ENCODE measurements at regions of chr18 and their contacts with region 1.

Region 1: DNA sequence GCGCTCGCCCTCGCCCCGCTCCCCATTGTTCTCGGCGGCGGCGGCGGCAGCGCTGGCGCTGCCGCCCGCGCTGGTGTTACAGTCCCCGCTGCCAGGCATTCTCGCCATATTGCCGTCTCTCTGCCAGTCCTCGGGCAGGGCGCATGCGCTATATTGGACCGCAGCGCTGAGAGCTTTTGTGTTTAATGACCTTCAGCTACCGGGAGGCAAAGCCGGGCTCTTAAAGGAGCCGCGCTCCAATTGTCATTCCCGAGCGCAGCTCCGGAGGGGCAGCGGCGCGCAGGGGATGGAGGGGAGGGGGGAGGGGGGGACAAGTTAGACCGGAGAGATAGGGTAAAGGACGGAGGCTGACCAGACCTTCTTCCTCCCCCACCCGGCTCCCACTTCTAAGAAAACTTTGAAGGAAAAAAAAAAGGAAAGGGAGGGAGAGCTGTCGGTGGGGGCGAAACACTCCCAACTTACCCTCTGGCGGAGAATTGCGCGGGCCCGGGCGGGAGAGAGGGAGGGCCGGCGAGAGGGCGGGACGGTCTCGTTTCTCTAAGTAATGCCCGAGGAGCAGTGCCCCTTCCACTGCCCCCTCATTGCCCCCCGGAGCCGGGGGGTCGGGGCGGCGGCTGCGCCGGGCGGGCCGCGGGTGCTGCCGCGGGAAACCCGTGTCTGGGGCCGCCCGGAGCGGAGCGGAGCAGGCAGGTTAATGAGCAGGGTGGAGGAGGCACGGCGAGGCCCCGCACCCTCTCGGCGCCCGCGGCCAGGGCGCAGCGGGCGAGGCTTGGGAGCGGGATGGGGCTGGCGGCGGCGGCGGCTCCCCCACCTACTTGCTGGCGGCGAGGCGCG is at the start of gene KCTD1:
- H3K4me3 Mint-ChIP-seq: peak within 1 kb of the TSS; percentile 89
- H3K27ac Mint-ChIP-seq: peak within 1 kb of the TSS; percentile 77
- H3K4me1 Mint-ChIP-seq: peaks cover 37% of the 10 kb centered on the region
- H3K27me3 Mint-ChIP-seq: peaks cover 67% of the 10 kb centered on the region

Region 2: GRCh38 chr18:26090130-26091046 is 458.3 kb before region 1 on chr18 and contains the start of gene SS18:
- intact Hi-C with region 1: loop called (anchors 10 kb)
- H3K4me3 Mint-ChIP-seq: peak within 1 kb of the TSS; percentile 94
- H3K27ac Mint-ChIP-seq: peak within 1 kb of the TSS; percentile 95
- H3K4me1 Mint-ChIP-seq: peaks cover 15% of the 10 kb centered on the region
- H3K27me3 Mint-ChIP-seq: no peaks in the 10 kb centered on the region

Region 3: GRCh38 chr18:26226229-26227005 is 322.2 kb before region 1 on chr18 and contains the start of gene TAF4B:
- intact Hi-C with region 1: loop called (anchors 5 kb)
- H3K4me3 Mint-ChIP-seq: peak within 1 kb of the TSS; percentile 96
- H3K27ac Mint-ChIP-seq: peak within 1 kb of the TSS; percentile 99
- H3K4me1 Mint-ChIP-seq: peaks cover 18% of the 10 kb centered on the region
- H3K27me3 Mint-ChIP-seq: peaks cover 9% of the 10 kb centered on the region

Region 4: DNA sequence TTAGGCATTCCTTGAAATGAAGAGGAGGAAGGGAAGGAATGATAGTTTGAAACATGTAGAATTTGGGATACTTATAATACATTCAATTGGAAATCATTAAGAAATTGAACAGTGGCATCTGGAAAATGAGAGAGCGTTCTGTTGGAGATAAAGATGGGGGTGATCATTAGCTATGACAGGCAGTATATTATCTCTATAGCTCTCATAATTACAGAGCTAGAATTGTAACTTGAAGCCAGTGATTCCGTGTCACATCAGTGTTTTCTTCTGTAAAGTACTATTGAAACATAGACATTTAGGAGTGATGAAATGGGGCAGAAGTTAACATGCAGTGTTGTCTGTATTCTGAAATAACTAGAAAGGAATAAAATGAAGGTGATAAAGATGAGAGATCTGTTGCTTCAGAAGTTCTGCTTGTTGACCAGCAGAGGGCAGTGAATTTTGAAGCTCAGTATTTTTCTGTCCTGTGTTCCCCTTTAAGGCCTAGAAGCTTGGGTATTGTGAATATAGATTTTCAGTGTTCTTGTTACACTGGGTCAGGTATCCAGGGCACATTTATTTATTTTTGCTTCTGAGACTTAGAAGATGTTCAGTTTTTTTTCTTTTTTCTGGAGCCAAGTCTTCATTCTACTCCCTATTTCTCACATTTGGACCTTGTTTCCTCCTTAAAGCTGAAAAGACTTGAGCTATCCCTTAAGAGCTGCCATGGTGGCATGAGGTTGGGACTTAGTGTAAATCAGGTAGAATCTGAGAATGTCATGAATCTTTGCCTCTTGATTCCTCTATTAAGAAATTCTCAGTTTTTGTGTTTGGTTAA is 165.0 kb before region 1 on chr18:
- intact Hi-C with region 1: loop called (anchors 10 kb)
- H3K4me3 Mint-ChIP-seq: no peak overlapping the region
- H3K27ac Mint-ChIP-seq: no peak overlapping the region
- H3K4me1 Mint-ChIP-seq: no peaks in the 10 kb centered on the region
- H3K27me3 Mint-ChIP-seq: no peaks in the 10 kb centered on the region

Region 5: GRCh38 chr18:26524504-26525351 is 23.9 kb before region 1 on chr18:
- intact Hi-C with region 1: loop called (anchors 2 kb)
- H3K4me3 Mint-ChIP-seq: no peak overlapping the region
- H3K27ac Mint-ChIP-seq: no peak overlapping the region
- H3K4me1 Mint-ChIP-seq: peaks cover 23% of the 10 kb centered on the region
- H3K27me3 Mint-ChIP-seq: peaks cover 2% of the 10 kb centered on the region

Region 6: DNA sequence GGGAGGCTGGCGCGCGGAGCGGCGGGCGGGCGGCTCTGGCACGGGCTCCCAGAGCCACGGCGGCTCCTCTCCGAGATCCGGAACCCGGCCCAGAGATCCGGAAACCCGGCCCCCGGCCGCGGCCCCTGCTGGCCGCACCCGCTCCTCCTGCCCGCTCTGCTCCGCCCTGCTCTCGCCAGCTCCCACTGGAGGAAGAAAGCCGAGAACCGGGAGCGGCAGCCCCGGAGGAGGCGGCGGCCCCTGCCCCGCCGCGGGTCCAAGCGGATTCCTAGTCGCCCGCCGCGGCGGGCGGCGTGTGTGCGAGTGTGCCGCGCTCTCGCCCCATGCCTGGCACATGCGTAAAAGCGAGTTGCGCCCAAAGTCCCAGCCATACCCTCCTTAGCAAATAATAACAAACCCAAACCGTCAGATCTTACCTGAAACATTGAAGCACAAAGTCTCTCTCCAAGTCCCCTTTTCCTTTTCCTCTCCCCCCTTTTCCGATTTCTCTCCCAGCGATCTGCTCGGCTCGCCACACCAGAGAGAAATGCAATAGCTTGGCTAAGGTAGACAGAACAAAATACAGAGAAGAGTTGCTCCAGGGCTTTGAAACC is 108.4 kb after region 1 on chr18:
- intact Hi-C with region 1: loop called (anchors 5 kb)
- H3K4me3 Mint-ChIP-seq: peak overlapping the region; percentile 80
- H3K27ac Mint-ChIP-seq: no peak overlapping the region
- H3K4me1 Mint-ChIP-seq: peaks cover 24% of the 10 kb centered on the region
- H3K27me3 Mint-ChIP-seq: peaks cover 54% of the 10 kb centered on the region